ENCODE measurements at regions of chr2 and their contacts with region 1.

Region 1: DNA sequence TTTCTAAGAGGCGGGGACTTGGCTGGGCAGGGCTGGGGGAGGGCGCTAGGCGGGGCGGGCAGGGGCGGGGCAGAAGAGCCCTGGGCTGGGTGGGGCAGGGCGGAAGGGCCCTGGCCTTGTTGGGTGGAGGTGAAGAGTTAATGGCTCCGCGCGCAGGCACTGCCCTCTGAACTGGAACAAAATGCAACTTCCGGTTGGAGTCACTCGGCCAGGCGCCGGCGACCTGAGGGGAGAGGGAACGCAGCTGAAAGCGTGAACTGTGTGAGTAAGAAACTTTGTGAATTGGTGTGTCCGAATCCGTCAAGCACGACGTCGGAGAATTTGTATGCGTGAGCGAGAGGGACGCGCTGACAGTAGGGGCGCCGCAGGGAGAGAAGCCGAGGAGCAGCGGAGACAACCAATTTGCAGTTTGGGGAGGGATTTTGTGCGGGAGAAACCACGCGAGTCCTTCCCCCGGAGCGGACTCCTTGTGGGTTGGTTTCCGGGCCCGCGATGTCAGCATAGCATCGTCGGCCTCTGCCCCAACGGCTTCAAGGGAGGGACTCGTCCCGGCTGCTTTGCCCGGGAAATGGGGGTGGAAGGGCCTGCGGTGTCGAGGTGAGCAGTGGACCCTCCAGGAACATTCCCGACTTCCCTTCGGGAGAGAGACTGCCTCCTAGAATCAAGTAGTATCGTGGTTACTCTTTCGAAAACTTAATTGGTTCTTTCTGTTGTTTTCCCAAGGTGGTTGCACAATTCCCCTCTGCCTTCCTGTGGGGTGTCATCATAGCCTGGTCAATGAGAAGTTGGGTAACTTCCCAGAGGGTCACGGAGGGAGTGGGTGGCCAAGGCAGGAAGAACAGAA is at the start of gene TANK:
- DNase-seq: peak; percentile 69 to 92 (median 84)
- H3K4me3 ChIP-seq: peak within 1 kb of the TSS; percentile 56 to 97 (median 83)
- H3K27ac ChIP-seq: peak within 1 kb of the TSS; percentile 55 to 96 (median 87)
- H3K27me3 ChIP-seq: no peaks in the 10 kb centered on the region
- CTCF ChIP-seq: peak in 20 of 56 donors; percentile 5 to 29 (median 22)
- total RNA-seq, gene TANK: 31.0 to 62.5 (median 45.1) TPM

Region 2: GRCh38 chr2:161096336-161096735 is 64.1 kb before region 1 on chr2:
- intact Hi-C with region 1: loop called in 1 of 2 experiments (anchors 5 kb)
- DNase-seq: no peak
- H3K4me3 ChIP-seq: no peak overlapping the region
- H3K27ac ChIP-seq: peak overlapping the region in 11 of 59 donors; percentile 2 to 57 (median 34)
- H3K27me3 ChIP-seq: peaks cover 0 to 4% (median 0%) of the 10 kb centered on the region in 45 donors
- CTCF ChIP-seq: no peak

Region 3: GRCh38 chr2:161352719-161353118 is 192.3 kb after region 1 on chr2:
- intact Hi-C with region 1: no loop called
- DNase-seq: no peak
- H3K4me3 ChIP-seq: no peak overlapping the region
- H3K27ac ChIP-seq: no peak overlapping the region
- H3K27me3 ChIP-seq: no peaks in the 10 kb centered on the region
- CTCF ChIP-seq: no peak

Measured in dorsolateral prefrontal cortex (tissue), 120 donors.